ENCODE measurements at regions of chr2 and their contacts with region 1.

Region 1: GRCh38 chr2:27032495-27033252 is at the start of gene TMEM214:
- DNase-seq: peak; percentile 89
- ATAC-seq: peak; percentile 96
- H3K4me3 Mint-ChIP-seq: peak within 1 kb of the TSS; percentile 89
- H3K27ac Mint-ChIP-seq: peak within 1 kb of the TSS; percentile 80
- H3K4me1 Mint-ChIP-seq: peaks cover 39% of the 10 kb centered on the region
- H3K27me3 Mint-ChIP-seq: no peaks in the 10 kb centered on the region
- total RNA-seq, gene TMEM214: 54.1 to 69.1 TPM

Region 2: DNA sequence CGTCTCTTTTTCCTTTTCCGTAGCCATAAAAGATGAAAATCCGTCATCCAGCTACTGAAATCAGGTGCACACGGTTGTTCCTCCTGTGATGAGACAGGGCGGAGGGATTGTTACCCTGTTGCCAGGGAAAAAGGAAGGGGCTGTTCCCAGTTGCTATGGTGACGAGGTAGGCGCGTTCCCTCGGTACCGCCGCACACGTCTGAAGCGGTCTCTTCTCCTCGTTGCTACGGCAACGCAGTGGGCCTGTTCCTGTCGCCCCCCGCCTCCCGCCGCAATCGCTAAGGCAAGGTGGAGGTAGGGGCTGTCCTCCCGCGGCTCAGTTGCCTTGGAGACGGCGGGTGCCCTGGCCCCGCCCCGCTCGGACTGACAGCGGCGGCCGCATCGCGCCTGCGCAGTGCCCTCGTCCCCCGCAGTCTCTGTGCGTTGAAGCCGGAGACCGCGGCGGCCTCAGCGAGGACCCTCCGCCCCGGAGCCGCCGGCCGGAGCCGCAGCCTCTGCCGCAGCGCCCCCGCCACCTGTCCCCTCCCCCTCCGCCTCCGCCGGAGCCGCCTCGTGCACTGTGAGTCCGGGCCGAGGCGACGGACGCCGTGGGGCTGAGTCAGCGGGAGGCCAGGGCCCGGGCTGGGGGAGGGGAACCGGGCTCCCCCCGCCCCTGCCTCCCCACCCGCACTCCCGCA is 62.3 kb before region 1 on chr2 and contains the start of gene MAPRE3:
- CTCF ChIA-PET with region 1: interaction called, 4 read pairs
- POLR2A ChIA-PET with region 1: no interaction called
- intact Hi-C with region 1: loop called in 1 of 2 experiments (anchors 1 kb)
- DNase-seq: peak; percentile 86
- ATAC-seq: peak; percentile 93
- H3K4me3 Mint-ChIP-seq: peak within 1 kb of the TSS; percentile 72
- H3K27ac Mint-ChIP-seq: peak within 1 kb of the TSS; percentile 5
- H3K4me1 Mint-ChIP-seq: peaks cover 15% of the 10 kb centered on the region
- H3K27me3 Mint-ChIP-seq: peaks cover 11% of the 10 kb centered on the region
- total RNA-seq, gene MAPRE3: 3.2 to 4.1 TPM

Region 3: DNA sequence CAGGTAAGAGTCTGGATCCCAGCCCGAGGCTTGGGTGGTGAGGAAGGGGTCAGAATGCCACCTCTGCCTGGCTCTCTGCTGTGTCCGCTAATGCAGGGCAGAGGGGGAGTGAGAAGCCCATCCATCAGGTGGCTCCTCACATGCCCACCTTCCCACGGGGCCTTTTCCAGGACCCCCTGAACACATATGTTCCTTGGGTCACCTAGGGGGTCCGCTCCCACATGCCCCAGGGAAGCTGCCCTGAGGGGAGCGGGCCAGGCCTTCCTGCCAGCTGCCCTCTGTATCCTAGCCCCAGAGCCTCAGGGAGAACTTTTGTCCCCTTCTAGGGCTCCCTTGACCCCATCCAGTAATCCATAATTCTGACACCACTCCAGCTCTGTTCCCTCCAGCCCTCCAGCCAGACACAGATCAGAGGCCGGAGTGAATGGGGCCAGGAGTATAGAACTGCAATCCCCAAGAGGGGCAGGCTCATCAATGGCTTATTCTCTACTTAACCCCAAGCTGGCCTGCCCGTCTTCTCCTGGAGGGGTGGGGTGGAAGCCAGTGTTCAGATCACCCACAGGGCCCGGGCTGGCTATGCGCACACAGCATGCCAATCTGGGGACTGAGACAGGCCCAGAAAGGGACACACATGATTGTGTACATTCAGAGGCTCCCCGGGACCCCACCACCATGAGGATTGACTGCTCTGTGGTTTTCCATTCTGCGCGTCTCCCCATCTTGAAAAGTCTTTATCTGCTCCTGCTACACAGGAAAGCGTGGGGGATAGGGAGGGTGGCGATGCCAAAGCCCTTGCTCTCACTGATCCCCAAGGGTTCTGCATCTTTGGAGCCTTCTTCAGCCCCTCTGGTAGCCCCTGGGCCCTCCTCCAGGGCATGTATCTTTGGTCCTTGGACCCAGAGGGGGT is 46.8 kb after region 1 on chr2:
- CTCF ChIA-PET with region 1: no interaction called
- POLR2A ChIA-PET with region 1: interaction called, 3 read pairs
- intact Hi-C with region 1: loop called (anchors 1 kb)
- DNase-seq: no peak
- ATAC-seq: no peak
- H3K4me3 Mint-ChIP-seq: no peak overlapping the region
- H3K27ac Mint-ChIP-seq: peak overlapping the region; percentile 83
- H3K4me1 Mint-ChIP-seq: peaks cover 43% of the 10 kb centered on the region
- H3K27me3 Mint-ChIP-seq: no peaks in the 10 kb centered on the region

Region 4: GRCh38 chr2:27133905-27134780 is 101.5 kb after region 1 on chr2 and contains the start of gene PREB:
- CTCF ChIA-PET with region 1: no interaction called
- POLR2A ChIA-PET with region 1: no interaction called
- intact Hi-C with region 1: loop called in 1 of 2 experiments (anchors 1 kb)
- DNase-seq: peak; percentile 99
- ATAC-seq: peak; percentile 97
- H3K4me3 Mint-ChIP-seq: peak within 1 kb of the TSS; percentile 81
- H3K27ac Mint-ChIP-seq: peak within 1 kb of the TSS; percentile 94
- H3K4me1 Mint-ChIP-seq: peaks cover 16% of the 10 kb centered on the region
- H3K27me3 Mint-ChIP-seq: no peaks in the 10 kb centered on the region
- total RNA-seq, gene PREB: 59.7 to 59.9 TPM

Region 5: DNA sequence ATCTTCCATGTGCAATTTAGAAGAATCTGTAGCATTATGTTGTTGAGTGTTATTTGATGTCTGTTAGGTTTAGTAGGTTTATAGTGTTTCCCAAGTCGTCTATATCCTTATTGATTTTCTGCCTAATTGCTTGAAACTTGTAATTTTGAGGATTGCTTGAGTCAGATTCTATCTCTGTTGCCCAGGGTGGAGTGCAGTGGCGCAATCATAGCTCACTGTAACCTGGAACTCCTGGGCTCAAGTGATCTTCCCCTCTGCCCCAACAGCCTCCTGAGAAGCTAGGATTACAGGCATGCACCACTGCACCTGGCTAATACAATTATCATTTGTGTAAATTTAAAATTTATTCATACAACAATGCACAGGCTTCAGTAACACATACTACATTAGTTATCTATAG is 113.0 kb after region 1 on chr2:
- CTCF ChIA-PET with region 1: no interaction called
- POLR2A ChIA-PET with region 1: no interaction called
- intact Hi-C with region 1: no loop called
- DNase-seq: no peak
- ATAC-seq: no peak
- H3K4me3 Mint-ChIP-seq: no peak overlapping the region
- H3K27ac Mint-ChIP-seq: no peak overlapping the region
- H3K4me1 Mint-ChIP-seq: no peaks in the 10 kb centered on the region
- H3K27me3 Mint-ChIP-seq: peaks cover 3% of the 10 kb centered on the region